HCT116 (cell line): ENCODE measurements at regions of chr5 and their contacts with region 1.

Region 1: GRCh38 chr5:141960449-141961202 is 2.6 kb upstream of the PCDH12 start:
- DNase-seq: peak; percentile 72
- ATAC-seq: peak; percentile 96
- H3K4me3 ChIP-seq: no peak overlapping the region
- H3K27ac ChIP-seq: no peak overlapping the region
- H3K4me1 ChIP-seq: peaks cover 0 to 10% of the 10 kb centered on the region in 2 experiments; a peak in 1 of 4 replicates
- H3K27me3 ChIP-seq: no peaks in the 10 kb centered on the region
- CTCF ChIP-seq: peak; percentile 87 to 96 (median 89)
- POLR2A ChIP-seq: no peak
- RAD21 ChIP-seq: peak; percentile 97

Region 2: GRCh38 chr5:141664732-141665461 is 295.7 kb before region 1 on chr5:
- CTCF ChIA-PET with region 1: interaction called, 7 read pairs
- POLR2A ChIA-PET with region 1: no interaction called
- RAD21 ChIA-PET with region 1: no interaction called
- intact Hi-C with region 1: loop called (anchors 1 kb)
- DNase-seq: peak; percentile 54
- ATAC-seq: peak; percentile 95
- H3K4me3 ChIP-seq: no peak overlapping the region
- H3K27ac ChIP-seq: no peak overlapping the region
- H3K4me1 ChIP-seq: 0 out of 4 replicates have a peak, but pooled peaks cover 0 to 3% of the 10 kb centered on the region in 2 experiments
- H3K27me3 ChIP-seq: no peaks in the 10 kb centered on the region
- CTCF ChIP-seq: peak; percentile 69 to 94 (median 92); a peak in 5 of 6 replicates
- POLR2A ChIP-seq: no peak
- RAD21 ChIP-seq: peak; percentile 95

Region 3: GRCh38 chr5:141701360-141702119 is 259.1 kb before region 1 on chr5:
- CTCF ChIA-PET with region 1: interaction called, 10 read pairs
- POLR2A ChIA-PET with region 1: no interaction called
- RAD21 ChIA-PET with region 1: no interaction called
- intact Hi-C with region 1: no loop called
- DNase-seq: no peak
- ATAC-seq: peak; percentile 53
- H3K4me3 ChIP-seq: no peak overlapping the region
- H3K27ac ChIP-seq: no peak overlapping the region
- H3K4me1 ChIP-seq: peaks cover 0 to 7% of the 10 kb centered on the region in 2 experiments; a peak in 1 of 4 replicates
- H3K27me3 ChIP-seq: no peaks in the 10 kb centered on the region
- CTCF ChIP-seq: no peak
- POLR2A ChIP-seq: no peak
- RAD21 ChIP-seq: no peak

Region 4: DNA sequence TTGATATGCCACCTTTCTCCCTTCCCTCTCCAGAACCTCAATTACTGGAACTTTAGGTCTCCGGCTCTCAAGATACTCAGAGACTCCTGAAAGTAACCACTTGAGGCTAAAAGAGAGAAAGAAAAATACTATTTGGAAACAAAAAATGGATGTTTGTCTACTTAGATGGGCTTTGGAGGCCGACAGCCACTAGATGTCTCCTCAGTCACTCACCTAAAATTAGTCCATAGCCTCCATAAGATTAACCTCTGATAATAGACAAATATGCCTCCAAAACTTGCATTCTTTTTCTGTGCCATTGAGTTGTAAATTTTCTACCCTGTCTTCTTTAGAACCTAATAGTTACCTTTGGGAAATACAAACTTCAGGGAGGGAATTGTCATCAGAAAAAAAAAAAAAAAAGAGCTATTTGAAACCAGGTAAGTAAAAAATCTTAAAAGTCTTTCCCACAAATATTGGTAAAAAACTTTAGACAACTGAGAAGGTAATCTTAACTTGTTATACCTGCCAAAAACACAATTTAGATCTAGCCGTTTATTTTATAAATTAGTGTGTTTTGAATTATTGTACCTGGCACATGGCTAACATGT is 71.2 kb before region 1 on chr5:
- CTCF ChIA-PET with region 1: interaction called, 34 read pairs
- POLR2A ChIA-PET with region 1: interaction called, 4 read pairs
- RAD21 ChIA-PET with region 1: interaction called, 3 to 6 read pairs
- intact Hi-C with region 1: loop called (anchors 1 kb)
- DNase-seq: no peak
- ATAC-seq: peak; percentile 76
- H3K4me3 ChIP-seq: no peak overlapping the region
- H3K27ac ChIP-seq: no peak overlapping the region
- H3K4me1 ChIP-seq: no peaks in the 10 kb centered on the region
- H3K27me3 ChIP-seq: no peaks in the 10 kb centered on the region
- CTCF ChIP-seq: peak; percentile 37 to 70 (median 55); a peak in 4 of 6 replicates
- POLR2A ChIP-seq: no peak
- RAD21 ChIP-seq: peak; percentile 69

Region 5: DNA sequence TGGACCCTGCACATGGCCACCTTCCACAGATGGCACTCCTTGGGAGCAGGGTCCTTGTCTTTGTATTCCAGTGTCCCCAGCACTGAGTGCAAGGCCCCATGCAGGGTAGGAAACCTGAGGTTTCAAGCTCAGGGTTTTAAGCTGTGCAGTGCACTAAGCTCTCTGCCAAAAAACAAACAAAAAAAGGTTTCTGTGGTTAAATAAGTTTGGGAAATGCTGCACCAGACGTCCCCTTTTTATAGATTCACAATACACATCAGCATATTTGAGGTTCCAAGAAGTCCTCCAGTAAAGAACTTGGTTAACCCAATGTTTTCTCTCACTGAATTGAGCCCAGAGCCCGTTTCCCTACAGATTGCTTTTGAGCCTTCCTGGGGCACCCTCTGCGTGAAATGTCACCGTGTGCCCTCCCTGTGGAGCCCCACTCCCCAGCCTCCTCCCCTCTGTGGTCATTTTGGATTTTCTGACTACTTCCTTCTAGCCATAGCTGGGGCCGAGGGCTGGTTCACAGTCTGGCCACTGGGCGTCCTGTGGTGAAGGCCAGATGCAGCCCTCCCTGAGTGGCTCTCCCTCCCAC is 19.8 kb before region 1 on chr5:
- CTCF ChIA-PET with region 1: interaction called, 19 read pairs
- POLR2A ChIA-PET with region 1: no interaction called
- RAD21 ChIA-PET with region 1: no interaction called
- intact Hi-C with region 1: no loop called
- DNase-seq: no peak
- ATAC-seq: peak; percentile 76
- H3K4me3 ChIP-seq: peak overlapping the region in 1 of 2 experiments; percentile 6; a peak in 1 of 4 replicates
- H3K27ac ChIP-seq: peak overlapping the region; percentile 53
- H3K4me1 ChIP-seq: peaks cover 5 to 17% of the 10 kb centered on the region in 2 experiments; a peak in 3 of 4 replicates
- H3K27me3 ChIP-seq: no peaks in the 10 kb centered on the region
- CTCF ChIP-seq: peak in 2 of 3 experiments; percentile 17; a peak in 1 of 6 replicates
- POLR2A ChIP-seq: no peak
- RAD21 ChIP-seq: no peak